ENCODE measurements at regions of chr15 and their contacts with region 1.

Region 1: GRCh38 chr15:67433495-67434099 is 87.3 kb upstream of the C15orf61 start:
- H3K4me3 ChIP-seq: no peak overlapping the region
- H3K27ac ChIP-seq: no peak overlapping the region
- H3K4me1 ChIP-seq: no peaks in the 10 kb centered on the region
- CTCF ChIP-seq: no peak

Region 2: GRCh38 chr15:67366904-67367303 is 66.7 kb before region 1 on chr15:
- CTCF ChIA-PET with region 1: no interaction called
- POLR2A ChIA-PET with region 1: no interaction called
- H3K4me3 ChIP-seq: no peak overlapping the region
- H3K27ac ChIP-seq: no peak overlapping the region
- H3K4me1 ChIP-seq: no peaks in the 10 kb centered on the region
- CTCF ChIP-seq: no peak

Region 3: DNA sequence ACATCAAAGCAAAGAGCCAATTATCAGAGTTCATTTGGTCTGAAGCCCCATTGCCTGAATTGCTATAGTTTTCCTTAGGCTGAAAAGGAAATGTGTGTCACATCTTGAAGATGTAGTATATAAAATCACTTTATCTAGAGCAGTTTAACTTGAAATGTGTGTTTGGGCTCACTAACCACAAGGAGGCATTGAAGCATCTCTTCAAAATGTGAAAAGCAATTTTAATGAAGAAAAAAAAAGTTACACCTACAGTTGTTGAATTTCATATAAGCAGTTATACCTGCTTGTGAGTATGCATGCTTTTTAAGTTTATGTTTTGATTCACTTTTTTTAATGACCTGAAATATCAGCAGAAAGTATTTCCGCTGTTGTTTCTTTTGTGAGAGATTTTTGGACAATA is 49.7 kb before region 1 on chr15:
- CTCF ChIA-PET with region 1: interaction called, 24 read pairs
- POLR2A ChIA-PET with region 1: no interaction called
- H3K4me3 ChIP-seq: no peak overlapping the region
- H3K27ac ChIP-seq: no peak overlapping the region
- H3K4me1 ChIP-seq: no peaks in the 10 kb centered on the region
- CTCF ChIP-seq: no peak

Region 4: DNA sequence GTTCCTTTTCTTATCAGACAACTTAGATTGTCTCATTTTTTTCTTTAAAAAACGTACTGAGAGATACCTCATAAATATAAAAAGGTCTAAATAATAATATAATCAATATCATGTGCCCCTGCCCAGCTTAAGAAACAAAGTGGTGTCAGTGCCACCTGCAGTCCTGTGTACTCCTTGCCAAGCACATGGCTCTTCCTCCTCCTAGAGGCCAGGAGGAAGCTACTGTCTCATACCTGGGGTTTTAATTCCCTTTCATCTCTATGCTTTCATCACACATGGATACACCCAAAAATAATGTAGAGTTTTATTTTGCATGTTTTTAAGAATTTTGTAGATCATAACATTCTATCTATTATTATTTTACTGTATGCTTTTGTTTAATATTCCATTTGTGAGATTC is 11.3 kb before region 1 on chr15:
- CTCF ChIA-PET with region 1: interaction called, 23 read pairs
- POLR2A ChIA-PET with region 1: no interaction called
- H3K4me3 ChIP-seq: no peak overlapping the region
- H3K27ac ChIP-seq: no peak overlapping the region
- H3K4me1 ChIP-seq: no peaks in the 10 kb centered on the region
- CTCF ChIP-seq: no peak

Region 5: GRCh38 chr15:67444100-67444499 is 10.5 kb after region 1 on chr15:
- CTCF ChIA-PET with region 1: interaction called, 12 read pairs
- POLR2A ChIA-PET with region 1: no interaction called
- H3K4me3 ChIP-seq: no peak overlapping the region
- H3K27ac ChIP-seq: no peak overlapping the region
- H3K4me1 ChIP-seq: no peaks in the 10 kb centered on the region
- CTCF ChIP-seq: no peak